ENCODE measurements at regions of chr22 and their contacts with region 1.

Region 1: DNA sequence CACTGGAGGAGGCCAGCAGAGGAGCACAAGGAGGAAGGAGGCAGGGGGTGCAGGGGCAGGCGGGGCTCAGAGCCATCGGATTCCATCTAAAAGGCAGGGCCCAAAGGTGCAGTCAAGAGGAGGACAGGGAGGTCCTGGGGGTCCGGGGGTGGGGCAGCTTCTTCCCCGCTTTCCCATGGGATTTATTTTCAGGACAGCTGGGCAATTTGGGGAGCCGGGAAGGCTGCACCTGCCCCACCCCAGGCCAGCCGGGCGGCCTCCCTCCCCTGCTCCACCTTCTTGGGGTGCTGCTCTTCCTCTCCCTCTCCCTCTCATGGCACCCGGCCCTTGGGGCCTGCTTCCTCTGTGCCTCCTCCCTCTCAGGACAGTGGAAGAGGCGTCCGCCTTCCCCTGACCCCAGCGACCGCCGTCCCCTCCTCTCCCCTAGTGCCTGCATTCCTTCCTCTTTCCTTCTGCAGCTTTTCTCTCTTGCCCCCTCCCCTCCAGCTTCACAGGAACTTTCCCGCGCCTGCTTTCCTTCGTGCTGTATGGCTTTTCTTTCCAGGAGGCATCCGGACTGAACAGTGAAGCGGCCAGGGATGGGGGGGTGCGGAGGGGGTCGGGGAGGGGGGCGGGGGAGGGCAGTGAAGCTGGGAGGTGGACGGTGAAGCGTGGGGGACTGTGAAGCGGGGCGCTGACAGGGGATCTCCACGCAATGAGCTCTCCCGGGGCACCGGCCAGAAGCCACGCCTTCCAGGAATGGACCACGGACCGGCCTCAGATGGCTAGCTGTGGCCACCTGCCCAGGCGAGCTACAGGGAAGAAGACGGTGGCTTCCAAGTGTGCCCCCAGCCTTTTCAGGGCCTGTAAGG is 26.9 kb downstream of the APOBEC3H start:
- DNase-seq: no peak
- H3K4me3 ChIP-seq: no peak overlapping the region
- H3K27ac ChIP-seq: no peak overlapping the region
- H3K4me1 ChIP-seq: no peaks in the 10 kb centered on the region
- H3K27me3 ChIP-seq: no peaks in the 10 kb centered on the region
- CTCF ChIP-seq: no peak

Region 2: GRCh38 chr22:39078329-39078728 is 45.6 kb before region 1 on chr22:
- CTCF ChIA-PET with region 1: no interaction called
- dilution Hi-C with region 1: no loop called
- in situ Hi-C with region 1: no loop called
- intact Hi-C with region 1: no loop called
- DNase-seq: no peak
- H3K4me3 ChIP-seq: peak overlapping the region in 1 of 3 experiments; percentile 70
- H3K27ac ChIP-seq: no peak overlapping the region
- H3K4me1 ChIP-seq: peaks cover 10% of the 10 kb centered on the region
- H3K27me3 ChIP-seq: no peaks in the 10 kb centered on the region
- CTCF ChIP-seq: no peak

Region 3: DNA sequence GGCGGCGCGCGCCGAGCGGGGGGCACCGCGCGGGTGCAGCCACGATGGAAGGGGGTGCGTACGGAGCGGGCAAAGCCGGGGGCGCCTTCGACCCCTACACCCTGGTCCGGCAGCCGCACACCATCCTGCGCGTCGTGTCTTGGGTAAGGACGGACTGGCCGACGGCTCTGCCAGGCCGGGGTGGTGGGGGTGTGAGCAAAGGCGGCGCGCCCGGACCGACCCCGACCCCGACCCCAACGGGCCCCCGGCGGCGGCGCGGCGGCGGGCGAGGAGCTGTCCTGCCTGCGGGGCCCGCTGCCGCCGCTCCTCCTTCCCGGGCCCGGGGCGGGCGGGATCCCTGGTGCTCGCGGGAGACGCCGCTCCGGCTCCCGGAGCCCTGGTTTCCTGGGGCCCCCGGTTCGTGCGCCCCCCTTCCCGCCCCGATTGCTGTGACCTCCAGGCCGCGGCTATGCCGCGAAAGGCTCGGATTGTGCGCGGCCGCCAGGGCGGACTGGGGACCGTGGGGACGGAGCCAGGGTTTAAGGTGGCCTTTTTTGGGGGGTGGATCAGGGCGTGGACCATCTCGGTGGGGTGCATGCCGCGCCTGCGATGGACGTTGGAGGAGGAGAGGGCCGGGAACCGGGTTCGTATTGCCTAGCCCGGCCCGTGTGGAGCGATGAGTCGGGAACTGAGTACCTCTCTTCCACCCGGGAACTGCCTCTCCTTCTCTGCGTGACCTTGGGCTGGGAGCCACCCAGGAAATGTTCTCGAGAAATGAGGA is 226.2 kb after region 1 on chr22 and contains the start of gene SYNGR1:
- CTCF ChIA-PET with region 1: no interaction called
- dilution Hi-C with region 1: loop called (anchors 5 kb)
- in situ Hi-C with region 1: no loop called
- intact Hi-C with region 1: no loop called
- DNase-seq: no peak
- H3K4me3 ChIP-seq: peak within 1 kb of the TSS in 2 of 3 experiments; percentile 43 to 50
- H3K27ac ChIP-seq: no peak within 1 kb of the TSS
- H3K4me1 ChIP-seq: peaks cover 17% of the 10 kb centered on the region
- H3K27me3 ChIP-seq: peaks cover 4% of the 10 kb centered on the region
- CTCF ChIP-seq: no peak
- total RNA-seq, gene SYNGR1: 0.89 to 1.5 TPM